ENCODE measurements at regions of chr1 and their contacts with region 1.

Region 1: DNA sequence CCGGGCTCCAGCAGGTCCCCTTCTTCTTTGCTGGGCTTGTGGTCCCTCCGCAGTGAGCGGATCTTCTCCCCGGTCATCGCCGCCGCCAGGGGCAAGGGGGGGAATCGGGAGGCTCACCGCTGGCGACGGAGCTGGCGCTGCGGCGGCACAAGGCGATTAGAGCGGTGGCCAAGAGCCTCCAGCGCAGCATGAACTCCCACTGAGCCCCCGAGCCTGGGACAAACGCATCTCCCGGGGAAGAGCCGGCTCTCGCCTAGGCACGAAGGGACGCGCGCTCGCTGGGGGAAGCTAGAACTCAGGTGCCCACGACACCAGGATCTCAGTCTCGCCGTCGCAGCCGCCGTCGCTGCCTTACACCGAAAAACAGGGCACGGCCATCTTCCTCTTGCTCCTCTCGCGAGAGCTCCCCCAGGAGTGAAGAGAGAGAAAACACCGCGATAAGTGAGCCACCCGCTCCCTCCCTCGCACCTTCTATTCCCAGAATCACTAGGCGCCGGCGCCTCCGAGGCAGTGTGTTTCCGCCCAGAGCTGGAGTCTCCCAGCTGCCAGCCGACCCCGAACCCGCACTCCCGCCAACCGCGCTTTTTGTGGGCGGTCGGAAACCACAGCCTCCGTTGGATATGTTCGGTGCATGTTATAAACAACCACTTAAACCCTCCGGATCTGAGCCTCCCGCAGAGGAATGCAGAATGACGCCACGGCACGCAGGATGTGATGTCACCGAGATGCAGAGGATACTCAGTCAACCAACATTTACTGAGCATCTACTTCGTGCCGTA is at the start of gene ANKRD13C:
- DNase-seq: peak; percentile 95
- H3K4me3 ChIP-seq: peak within 1 kb of the TSS; percentile 79 to 91 (median 86)
- H3K27ac ChIP-seq: peak within 1 kb of the TSS; percentile 90 to 96 (median 92)
- H3K4me1 ChIP-seq: peaks cover 30 to 60% (median 54%) of the 10 kb centered on the region in 6 donors
- H3K27me3 ChIP-seq: no peaks in the 10 kb centered on the region
- CTCF ChIP-seq: peak in 2 of 11 experiments; percentile 13 to 37
- POLR2A ChIP-seq: peak in 2 of 3 donors; percentile 4 to 70
- total RNA-seq, gene ANKRD13C: 18.9 to 27.7 (median 23.2) TPM

Region 2: GRCh38 chr1:70410604-70411359 is 56.3 kb after region 1 on chr1 and contains the start of gene CTH:
- intact Hi-C with region 1: loop called (anchors 10 kb)
- DNase-seq: peak; percentile 97
- H3K4me3 ChIP-seq: peak within 1 kb of the TSS; percentile 58 to 74 (median 66)
- H3K27ac ChIP-seq: peak within 1 kb of the TSS; percentile 85 to 96 (median 93)
- H3K4me1 ChIP-seq: peaks cover 5 to 29% (median 21%) of the 10 kb centered on the region in 6 donors
- H3K27me3 ChIP-seq: peaks cover 0 to 4% (median 0%) of the 10 kb centered on the region in 7 donors
- CTCF ChIP-seq: peak in 1 of 11 experiments; percentile 36
- POLR2A ChIP-seq: peak in 1 of 3 donors; percentile 87
- total RNA-seq, gene CTH: 1.0 to 2.7 (median 1.3) TPM

Region 3: GRCh38 chr1:70427976-70428375 is 73.5 kb after region 1 on chr1:
- intact Hi-C with region 1: no loop called
- DNase-seq: no peak
- H3K4me3 ChIP-seq: no peak overlapping the region
- H3K27ac ChIP-seq: no peak overlapping the region
- H3K4me1 ChIP-seq: no peaks in the 10 kb centered on the region
- H3K27me3 ChIP-seq: no peaks in the 10 kb centered on the region
- CTCF ChIP-seq: no peak
- POLR2A ChIP-seq: no peak

Measured in spleen (tissue), 13 donors.